Activated CD4-positive, alpha-beta memory T cell treated with anti-CD3 and anti-CD28 coated beads, Interleukin-2, amount 10 ng/mL, durations not matched to agents 7 days and 5 days (primary cell): ENCODE measurements at regions of chr3 and their contacts with region 1.

Region 1: GRCh38 chr3:138068579-138069174 is 46.7 kb downstream of the DZIP1L start:
- DNase-seq: peak; percentile 79
- H3K4me3 Mint-ChIP-seq: no peak overlapping the region
- H3K27ac Mint-ChIP-seq: no peak overlapping the region
- H3K4me1 Mint-ChIP-seq: peaks cover 21% of the 10 kb centered on the region
- H3K27me3 Mint-ChIP-seq: peaks cover 36% of the 10 kb centered on the region

Region 2: GRCh38 chr3:137854533-137855280 is 214.0 kb before region 1 on chr3:
- CTCF ChIA-PET with region 1: no interaction called
- POLR2A ChIA-PET with region 1: no interaction called
- DNase-seq: no peak
- H3K4me3 Mint-ChIP-seq: no peak overlapping the region
- H3K27ac Mint-ChIP-seq: no peak overlapping the region
- H3K4me1 Mint-ChIP-seq: no peaks in the 10 kb centered on the region
- H3K27me3 Mint-ChIP-seq: no peaks in the 10 kb centered on the region

Region 3: DNA sequence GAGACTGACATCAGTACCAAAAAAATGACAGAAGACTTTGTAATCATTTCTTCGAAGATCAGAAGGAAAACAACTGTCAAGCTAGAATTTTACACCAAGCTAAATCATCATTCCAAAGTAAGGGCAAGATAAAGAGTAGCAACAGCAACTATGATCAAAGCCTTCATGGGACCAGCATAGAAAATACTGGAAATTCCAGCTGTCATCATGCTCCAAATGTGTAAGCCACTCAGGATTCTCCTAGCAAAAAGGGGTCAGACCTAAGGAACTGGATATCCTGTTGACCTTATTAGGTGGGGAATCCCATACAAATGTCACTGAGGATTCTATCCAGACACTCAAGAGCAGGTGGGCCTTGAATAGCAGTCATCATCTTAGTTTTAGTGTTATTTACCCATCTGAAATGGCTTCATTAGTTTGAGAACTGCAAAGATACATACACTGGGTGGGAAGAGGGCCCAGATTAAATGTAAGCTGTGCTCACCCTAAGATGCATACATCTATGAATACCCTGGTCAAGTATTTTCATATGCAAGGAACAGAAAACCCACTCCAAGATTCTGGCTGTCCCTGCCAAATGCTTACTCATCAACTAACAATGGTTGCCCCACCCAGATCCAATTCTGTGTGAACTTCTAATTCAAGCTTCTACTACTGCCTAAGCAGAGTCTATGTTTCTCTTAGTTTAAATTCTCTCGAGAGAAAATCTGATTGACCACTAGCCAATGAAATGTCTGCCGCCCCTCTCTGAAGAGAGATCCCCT is 25.2 kb before region 1 on chr3:
- CTCF ChIA-PET with region 1: no interaction called
- POLR2A ChIA-PET with region 1: no interaction called
- DNase-seq: no peak
- H3K4me3 Mint-ChIP-seq: no peak overlapping the region
- H3K27ac Mint-ChIP-seq: no peak overlapping the region
- H3K4me1 Mint-ChIP-seq: no peaks in the 10 kb centered on the region
- H3K27me3 Mint-ChIP-seq: peaks cover 26% of the 10 kb centered on the region

Region 4: DNA sequence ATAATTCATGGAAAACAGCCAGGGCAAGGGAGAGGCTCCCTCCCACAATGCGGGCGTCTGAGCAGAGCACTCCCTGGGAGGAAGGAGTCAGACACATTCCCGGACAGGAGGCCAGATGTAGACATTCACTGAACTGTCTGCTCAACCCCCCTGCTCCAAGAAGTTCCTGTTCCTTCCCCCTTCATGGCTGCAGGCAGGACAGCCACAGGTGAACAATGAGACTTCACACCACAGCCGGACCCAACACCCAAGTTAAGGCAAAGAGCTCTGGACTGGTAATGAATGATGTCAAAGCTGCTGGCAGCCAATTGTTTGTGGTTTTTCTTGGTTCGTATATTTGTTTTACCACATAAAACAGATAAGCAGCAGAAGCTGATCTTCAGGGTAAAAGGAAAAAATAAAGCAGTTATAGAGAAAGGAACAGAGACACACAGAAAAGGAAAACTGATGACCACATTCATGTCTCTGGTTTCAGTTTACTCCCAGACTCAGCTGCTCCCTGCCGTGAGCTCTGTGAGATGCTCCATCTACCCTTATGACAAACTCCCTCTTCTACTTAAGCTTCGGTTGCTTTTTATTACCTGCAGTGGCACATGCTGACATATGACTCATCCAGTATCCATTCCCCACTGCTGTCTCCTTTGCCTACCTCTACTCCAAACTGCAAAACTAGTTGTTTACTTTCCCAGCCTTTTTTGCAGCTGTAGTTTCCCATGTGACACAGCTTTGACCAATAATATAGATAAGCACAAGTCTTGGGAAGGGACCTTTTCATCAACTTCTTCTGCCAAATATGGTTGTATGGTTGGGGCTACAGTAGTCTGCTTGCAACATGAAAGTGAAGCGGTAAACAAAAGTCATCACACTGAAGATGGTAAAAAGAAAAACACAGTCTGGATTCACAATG is 13.7 kb after region 1 on chr3:
- CTCF ChIA-PET with region 1: interaction called, 17 read pairs
- POLR2A ChIA-PET with region 1: interaction called, 3 read pairs
- DNase-seq: peak; percentile 34
- H3K4me3 Mint-ChIP-seq: peak overlapping the region; percentile 56
- H3K27ac Mint-ChIP-seq: peak overlapping the region; percentile 59
- H3K4me1 Mint-ChIP-seq: peaks cover 32% of the 10 kb centered on the region
- H3K27me3 Mint-ChIP-seq: peaks cover 17% of the 10 kb centered on the region

Region 5: DNA sequence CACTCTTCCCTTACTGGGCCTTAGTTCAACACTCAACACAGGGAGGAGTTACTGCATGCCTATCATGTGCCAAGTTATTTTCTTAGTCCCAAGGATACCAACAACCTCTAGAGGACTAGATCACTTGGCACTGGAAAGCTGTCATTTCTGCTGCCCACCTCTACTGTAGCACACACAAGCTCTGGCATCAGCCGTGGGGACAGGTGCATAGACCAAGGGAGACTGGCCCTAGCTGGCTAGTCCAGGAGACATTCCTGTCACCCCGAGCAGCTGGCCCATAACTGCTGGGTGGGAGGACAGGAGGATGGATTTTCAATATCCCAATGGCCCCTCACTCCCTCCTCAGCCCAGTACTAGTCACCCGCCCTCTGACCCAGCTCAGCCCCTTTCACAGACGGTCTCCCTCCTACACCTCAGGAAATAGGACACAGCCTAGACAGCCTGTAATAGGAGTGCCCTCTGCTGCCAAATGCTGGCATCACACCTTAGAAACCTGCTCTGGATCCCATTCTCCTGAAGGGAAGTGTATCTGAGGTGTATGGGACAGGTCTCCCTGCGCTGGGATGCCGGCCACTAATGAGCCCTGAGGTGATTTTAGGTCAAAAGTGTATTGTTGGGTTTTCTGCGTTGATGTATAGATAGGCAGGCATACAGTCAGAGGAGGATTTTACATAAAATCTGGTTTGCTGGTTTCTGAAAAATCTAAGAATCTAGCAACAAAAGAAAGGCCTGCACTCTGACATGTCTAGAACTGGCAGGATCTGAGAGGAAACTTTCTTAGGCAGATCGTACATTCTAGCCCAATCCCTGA is 50.1 kb after region 1 on chr3:
- CTCF ChIA-PET with region 1: interaction called, 57 read pairs
- POLR2A ChIA-PET with region 1: interaction called, 3 read pairs
- DNase-seq: peak; percentile 56
- H3K4me3 Mint-ChIP-seq: no peak overlapping the region
- H3K27ac Mint-ChIP-seq: no peak overlapping the region
- H3K4me1 Mint-ChIP-seq: peaks cover 8% of the 10 kb centered on the region
- H3K27me3 Mint-ChIP-seq: peaks cover 44% of the 10 kb centered on the region

Region 6: DNA sequence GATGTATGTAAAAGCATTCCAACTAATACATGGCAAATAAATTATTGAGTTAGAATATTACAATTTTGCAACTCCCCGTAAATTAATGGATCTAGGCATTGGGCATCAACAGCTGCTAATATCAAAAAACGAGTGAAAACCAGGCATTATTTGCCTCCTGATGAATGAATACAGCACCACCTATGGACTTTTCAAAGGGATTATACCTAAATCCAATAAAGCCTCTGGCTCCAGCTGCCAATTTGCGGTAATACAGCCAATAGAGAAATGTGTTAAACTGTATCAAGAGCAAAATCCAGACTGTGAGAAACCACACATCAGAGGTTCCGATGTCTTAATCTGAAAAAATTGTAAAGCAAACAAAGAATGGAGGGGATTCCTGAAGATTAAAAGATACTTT is 79.8 kb after region 1 on chr3:
- CTCF ChIA-PET with region 1: no interaction called
- POLR2A ChIA-PET with region 1: no interaction called
- DNase-seq: no peak
- H3K4me3 Mint-ChIP-seq: no peak overlapping the region
- H3K27ac Mint-ChIP-seq: no peak overlapping the region
- H3K4me1 Mint-ChIP-seq: no peaks in the 10 kb centered on the region
- H3K27me3 Mint-ChIP-seq: peaks cover 15% of the 10 kb centered on the region